Adrenal gland (tissue), 19 donors: ENCODE measurements at regions of chr20 and their contacts with region 1.

Region 1: GRCh38 chr20:58481481-58482021 is 33.6 kb downstream of the APCDD1L start:
- DNase-seq: peak in 6 of 7 donors; percentile 41 to 74 (median 58)
- H3K4me3 ChIP-seq: no peak overlapping the region
- H3K27ac ChIP-seq: no peak overlapping the region
- H3K4me1 ChIP-seq: no peaks in the 10 kb centered on the region
- H3K27me3 ChIP-seq: no peaks in the 10 kb centered on the region
- CTCF ChIP-seq: peak; percentile 41 to 83 (median 67)
- POLR2A ChIP-seq: no peak

Region 2: GRCh38 chr20:58536310-58536709 is 54.8 kb after region 1 on chr20:
- intact Hi-C with region 1: no loop called
- DNase-seq: no peak
- H3K4me3 ChIP-seq: no peak overlapping the region
- H3K27ac ChIP-seq: no peak overlapping the region
- H3K4me1 ChIP-seq: no peaks in the 10 kb centered on the region
- H3K27me3 ChIP-seq: no peaks in the 10 kb centered on the region
- CTCF ChIP-seq: no peak
- POLR2A ChIP-seq: no peak

Region 3: GRCh38 chr20:58623826-58624473 is 142.4 kb after region 1 on chr20:
- intact Hi-C with region 1: no loop called
- DNase-seq: peak; percentile 78 to 89 (median 87)
- H3K4me3 ChIP-seq: no peak overlapping the region
- H3K27ac ChIP-seq: no peak overlapping the region
- H3K4me1 ChIP-seq: no peaks in the 10 kb centered on the region
- H3K27me3 ChIP-seq: no peaks in the 10 kb centered on the region
- CTCF ChIP-seq: no peak
- POLR2A ChIP-seq: no peak

Region 4: GRCh38 chr20:58649286-58650180 is 168.0 kb after region 1 on chr20:
- intact Hi-C with region 1: loop called in 1 of 2 experiments (anchors 5 kb)
- DNase-seq: peak in 3 of 7 donors; percentile 26 to 55 (median 44)
- H3K4me3 ChIP-seq: peak overlapping the region in 3 of 4 donors; percentile 25 to 92 (median 27)
- H3K27ac ChIP-seq: peak overlapping the region in 4 of 5 donors; percentile 80 to 97 (median 94)
- H3K4me1 ChIP-seq: peaks cover 8 to 34% of the 10 kb centered on the region in 2 donors
- H3K27me3 ChIP-seq: no peaks in the 10 kb centered on the region
- CTCF ChIP-seq: no peak
- POLR2A ChIP-seq: no peak

Region 5: GRCh38 chr20:58850693-58851174 is 369.2 kb after region 1 on chr20 and contains the start of gene GNAS-AS1:
- intact Hi-C with region 1: loop called in 1 of 2 experiments (anchors 10 kb)
- DNase-seq: peak in 4 of 7 donors; percentile 35 to 68 (median 39)
- H3K4me3 ChIP-seq: no peak within 1 kb of the TSS
- H3K27ac ChIP-seq: no peak within 1 kb of the TSS
- H3K4me1 ChIP-seq: no peaks in the 10 kb centered on the region
- H3K27me3 ChIP-seq: peaks cover 36% of the 10 kb centered on the region
- CTCF ChIP-seq: no peak
- POLR2A ChIP-seq: no peak
- total RNA-seq, gene GNAS-AS1: 0.11 to 1.00 (median 0.42) TPM in 4 of 9 donors, not detected in the others